ENCODE measurements at regions of chr3 and their contacts with region 1.

Region 1: DNA sequence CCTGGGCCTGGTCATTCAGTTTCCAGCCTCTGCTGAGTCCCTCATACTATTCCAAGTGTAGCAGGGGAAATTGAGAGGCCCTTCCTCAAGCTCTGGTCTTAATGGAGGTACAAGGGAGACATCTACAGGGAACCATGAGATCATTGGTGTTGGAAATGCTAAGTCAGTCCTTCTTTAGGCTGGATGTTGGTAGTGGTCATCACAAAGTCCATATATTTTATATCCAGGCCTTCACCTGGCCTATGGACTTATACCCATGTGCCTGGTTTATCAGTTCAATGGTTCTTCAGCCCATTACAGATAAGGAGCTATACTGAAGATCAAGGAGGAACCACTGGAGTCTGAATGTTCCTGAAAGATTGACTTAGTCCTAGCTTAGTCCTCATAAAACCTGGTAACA is 135.0 kb downstream of the STAG1 start:
- DNase-seq: no peak
- H3K4me3 ChIP-seq: no peak overlapping the region
- H3K4me3 Mint-ChIP-seq: no peak overlapping the region
- H3K27ac ChIP-seq: peak overlapping the region in 1 of 2 donors; percentile 78
- H3K27ac Mint-ChIP-seq: peak overlapping the region in 3 of 7 donors; percentile 20 to 85 (median 33)
- H3K4me1 ChIP-seq: peaks cover 33 to 47% of the 10 kb centered on the region in 2 donors
- H3K4me1 Mint-ChIP-seq: peaks cover 34% of the 10 kb centered on the region
- H3K27me3 ChIP-seq: no peaks in the 10 kb centered on the region
- H3K27me3 Mint-ChIP-seq: no peaks in the 10 kb centered on the region
- CTCF ChIP-seq: no peak

Region 2: GRCh38 chr3:136559896-136560295 is 57.3 kb before region 1 on chr3:
- intact Hi-C with region 1: loop called in 1 of 2 experiments (anchors 10 kb)
- DNase-seq: no peak
- H3K4me3 ChIP-seq: no peak overlapping the region
- H3K4me3 Mint-ChIP-seq: no peak overlapping the region
- H3K27ac ChIP-seq: no peak overlapping the region
- H3K27ac Mint-ChIP-seq: no peak overlapping the region
- H3K4me1 ChIP-seq: no peaks in the 10 kb centered on the region
- H3K4me1 Mint-ChIP-seq: no peaks in the 10 kb centered on the region
- H3K27me3 ChIP-seq: no peaks in the 10 kb centered on the region
- H3K27me3 Mint-ChIP-seq: no peaks in the 10 kb centered on the region
- CTCF ChIP-seq: no peak

Region 3: GRCh38 chr3:136694321-136694720 is 77.1 kb after region 1 on chr3:
- intact Hi-C with region 1: no loop called
- DNase-seq: no peak
- H3K4me3 ChIP-seq: no peak overlapping the region
- H3K4me3 Mint-ChIP-seq: no peak overlapping the region
- H3K27ac ChIP-seq: no peak overlapping the region
- H3K27ac Mint-ChIP-seq: peak overlapping the region in 2 of 7 donors; percentile 46 to 86
- H3K4me1 ChIP-seq: peaks cover 33 to 41% of the 10 kb centered on the region in 2 donors
- H3K4me1 Mint-ChIP-seq: peaks cover 46% of the 10 kb centered on the region
- H3K27me3 ChIP-seq: no peaks in the 10 kb centered on the region
- H3K27me3 Mint-ChIP-seq: peaks cover 0 to 4% (median 0%) of the 10 kb centered on the region in 3 donors
- CTCF ChIP-seq: no peak

Measured in CD14-positive monocyte (primary cell).